Activated CD8-positive, alpha-beta T cell treated with anti-CD3 and anti-CD28 coated beads for 36 hours (primary cell): ENCODE measurements at regions of chr1 and their contacts with region 1.

Region 1: GRCh38 chr1:225977937-225978748 is 21.0 kb downstream of the SDE2 start:
- DNase-seq: no peak
- ATAC-seq: no peak
- H3K4me3 Mint-ChIP-seq: no peak overlapping the region
- H3K27ac Mint-ChIP-seq: peak overlapping the region; percentile 10
- H3K4me1 Mint-ChIP-seq: peaks cover 11% of the 10 kb centered on the region
- H3K27me3 Mint-ChIP-seq: no peaks in the 10 kb centered on the region
- CTCF ChIP-seq: no peak

Region 2: DNA sequence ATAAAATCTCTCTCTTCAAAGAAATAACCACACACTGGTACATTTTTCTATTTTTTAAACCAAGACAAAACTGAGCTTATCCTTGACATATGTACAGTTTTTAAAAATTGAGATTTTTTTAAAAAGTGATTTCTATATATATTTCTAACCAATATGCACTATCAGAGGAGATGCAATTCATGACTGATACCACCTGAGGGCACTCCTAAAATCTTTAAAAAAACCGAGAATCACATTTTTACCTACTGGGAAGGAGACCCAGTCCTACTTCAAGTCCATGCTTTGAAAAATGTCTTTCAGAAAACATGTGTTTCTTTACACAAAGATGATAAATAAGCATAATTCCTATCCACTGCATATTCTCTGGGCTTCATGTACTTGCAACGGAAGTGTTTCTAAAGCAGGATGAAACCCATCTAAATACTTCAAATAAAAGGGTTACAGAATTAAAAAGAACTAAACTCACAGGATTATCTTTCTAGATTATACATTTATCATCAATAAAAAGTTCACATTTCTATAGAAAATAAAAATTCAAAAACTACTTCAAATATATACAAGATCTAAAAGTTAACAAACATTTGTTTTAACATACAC is 423.8 kb before region 1 on chr1:
- CTCF ChIA-PET with region 1: interaction called, 4 read pairs
- POLR2A ChIA-PET with region 1: no interaction called
- intact Hi-C with region 1: loop called (anchors 10 kb)
- DNase-seq: no peak
- ATAC-seq: peak; percentile 51
- H3K4me3 Mint-ChIP-seq: no peak overlapping the region
- H3K27ac Mint-ChIP-seq: no peak overlapping the region
- H3K4me1 Mint-ChIP-seq: no peaks in the 10 kb centered on the region
- H3K27me3 Mint-ChIP-seq: peaks cover 3% of the 10 kb centered on the region
- CTCF ChIP-seq: peak; percentile 73